IMR-90 (cell line): ENCODE measurements at regions of chr11 and their contacts with region 1.

Region 1: GRCh38 chr11:28836285-28837081 is 728.3 kb downstream of the METTL15 start:
- DNase-seq: peak; percentile 99
- ATAC-seq: peak; percentile 79
- H3K4me3 ChIP-seq: no peak overlapping the region
- H3K27ac ChIP-seq: peak overlapping the region; percentile 98
- H3K4me1 ChIP-seq: peaks cover 14% of the 10 kb centered on the region
- H3K27me3 ChIP-seq: no peaks in the 10 kb centered on the region
- CTCF ChIP-seq: no peak
- POLR2A ChIP-seq: peak; percentile 45
- RAD21 ChIP-seq: peak; percentile 8; the same call in 1 of the 2 replicates

Region 2: GRCh38 chr11:27698872-27699474 is 1137.5 kb before region 1 on chr11:
- CTCF ChIA-PET with region 1: interaction called, 5 read pairs
- POLR2A ChIA-PET with region 1: interaction called, 4 read pairs
- dilution Hi-C with region 1: no loop called
- in situ Hi-C with region 1: loop called (anchors 25 kb)
- intact Hi-C with region 1: loop called (anchors 2 kb)
- DNase-seq: peak; percentile 92
- ATAC-seq: peak; percentile 53
- H3K4me3 ChIP-seq: peak overlapping the region; percentile 85
- H3K27ac ChIP-seq: peak overlapping the region; percentile 92
- H3K4me1 ChIP-seq: peaks cover 6% of the 10 kb centered on the region; the same call in 1 of the 2 replicates
- H3K27me3 ChIP-seq: no peaks in the 10 kb centered on the region
- CTCF ChIP-seq: peak; percentile 84
- POLR2A ChIP-seq: peak; percentile 82
- RAD21 ChIP-seq: peak; percentile 85

Region 3: DNA sequence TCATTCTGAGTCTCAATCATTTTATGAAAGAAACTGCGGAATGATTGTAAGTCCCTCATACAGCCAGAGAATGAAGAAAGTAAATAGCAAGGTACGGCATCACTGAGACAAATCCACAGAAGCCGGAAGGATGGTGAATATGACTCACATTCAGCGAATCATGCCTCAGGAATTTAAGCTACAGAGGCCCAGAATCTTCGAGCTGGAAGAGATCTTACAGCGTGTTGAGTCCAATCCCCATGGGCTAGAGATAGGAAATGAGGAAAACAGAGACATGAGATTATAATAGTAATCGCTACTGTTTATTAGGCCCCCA is 901.7 kb before region 1 on chr11:
- CTCF ChIA-PET with region 1: no interaction called
- POLR2A ChIA-PET with region 1: no interaction called
- dilution Hi-C with region 1: no loop called
- in situ Hi-C with region 1: no loop called
- intact Hi-C with region 1: loop called (anchors 1 kb)
- DNase-seq: peak; percentile 98
- ATAC-seq: peak; percentile 69
- H3K4me3 ChIP-seq: peak overlapping the region; percentile 11; the same call in 1 of the 2 replicates
- H3K27ac ChIP-seq: peak overlapping the region; percentile 90
- H3K4me1 ChIP-seq: peaks cover 6% of the 10 kb centered on the region
- H3K27me3 ChIP-seq: no peaks in the 10 kb centered on the region
- CTCF ChIP-seq: no peak
- POLR2A ChIP-seq: no peak; the same call in none of the 2 replicates
- RAD21 ChIP-seq: peak; percentile 29; the same call in 1 of the 2 replicates

Region 4: GRCh38 chr11:28566339-28567089 is 270.0 kb before region 1 on chr11:
- CTCF ChIA-PET with region 1: no interaction called
- POLR2A ChIA-PET with region 1: no interaction called
- dilution Hi-C with region 1: no loop called
- in situ Hi-C with region 1: no loop called
- intact Hi-C with region 1: loop called (anchors 2 kb)
- DNase-seq: peak; percentile 100
- ATAC-seq: peak; percentile 98
- H3K4me3 ChIP-seq: peak overlapping the region; percentile 3; the same call in 1 of the 2 replicates
- H3K27ac ChIP-seq: peak overlapping the region; percentile 78
- H3K4me1 ChIP-seq: peaks cover 5% of the 10 kb centered on the region
- H3K27me3 ChIP-seq: no peaks in the 10 kb centered on the region
- CTCF ChIP-seq: no peak
- POLR2A ChIP-seq: peak; percentile 13; the same call in 1 of the 2 replicates
- RAD21 ChIP-seq: peak; percentile 40

Region 5: GRCh38 chr11:29019960-29020683 is 183.6 kb after region 1 on chr11:
- CTCF ChIA-PET with region 1: no interaction called
- POLR2A ChIA-PET with region 1: no interaction called
- dilution Hi-C with region 1: no loop called
- in situ Hi-C with region 1: no loop called
- intact Hi-C with region 1: loop called (anchors 2 kb)
- DNase-seq: peak; percentile 66
- ATAC-seq: peak; percentile 38
- H3K4me3 ChIP-seq: no peak overlapping the region
- H3K27ac ChIP-seq: peak overlapping the region; percentile 30; the same call in 1 of the 2 replicates
- H3K4me1 ChIP-seq: peaks cover 6% of the 10 kb centered on the region; the same call in 1 of the 2 replicates
- H3K27me3 ChIP-seq: no peaks in the 10 kb centered on the region
- CTCF ChIP-seq: peak; percentile 63
- POLR2A ChIP-seq: no peak
- RAD21 ChIP-seq: peak; percentile 55

Region 6: GRCh38 chr11:29173660-29174062 is 337.2 kb after region 1 on chr11:
- CTCF ChIA-PET with region 1: no interaction called
- POLR2A ChIA-PET with region 1: interaction called, 3 read pairs
- dilution Hi-C with region 1: no loop called
- in situ Hi-C with region 1: no loop called
- intact Hi-C with region 1: loop called (anchors 1 kb)
- DNase-seq: peak; percentile 99
- ATAC-seq: peak; percentile 86
- H3K4me3 ChIP-seq: no peak overlapping the region
- H3K27ac ChIP-seq: peak overlapping the region; percentile 99; the same call in 1 of the 2 replicates
- H3K4me1 ChIP-seq: peaks cover 6% of the 10 kb centered on the region
- H3K27me3 ChIP-seq: no peaks in the 10 kb centered on the region
- CTCF ChIP-seq: no peak
- POLR2A ChIP-seq: no peak
- RAD21 ChIP-seq: peak; percentile 19; the same call in 1 of the 2 replicates

Region 7: DNA sequence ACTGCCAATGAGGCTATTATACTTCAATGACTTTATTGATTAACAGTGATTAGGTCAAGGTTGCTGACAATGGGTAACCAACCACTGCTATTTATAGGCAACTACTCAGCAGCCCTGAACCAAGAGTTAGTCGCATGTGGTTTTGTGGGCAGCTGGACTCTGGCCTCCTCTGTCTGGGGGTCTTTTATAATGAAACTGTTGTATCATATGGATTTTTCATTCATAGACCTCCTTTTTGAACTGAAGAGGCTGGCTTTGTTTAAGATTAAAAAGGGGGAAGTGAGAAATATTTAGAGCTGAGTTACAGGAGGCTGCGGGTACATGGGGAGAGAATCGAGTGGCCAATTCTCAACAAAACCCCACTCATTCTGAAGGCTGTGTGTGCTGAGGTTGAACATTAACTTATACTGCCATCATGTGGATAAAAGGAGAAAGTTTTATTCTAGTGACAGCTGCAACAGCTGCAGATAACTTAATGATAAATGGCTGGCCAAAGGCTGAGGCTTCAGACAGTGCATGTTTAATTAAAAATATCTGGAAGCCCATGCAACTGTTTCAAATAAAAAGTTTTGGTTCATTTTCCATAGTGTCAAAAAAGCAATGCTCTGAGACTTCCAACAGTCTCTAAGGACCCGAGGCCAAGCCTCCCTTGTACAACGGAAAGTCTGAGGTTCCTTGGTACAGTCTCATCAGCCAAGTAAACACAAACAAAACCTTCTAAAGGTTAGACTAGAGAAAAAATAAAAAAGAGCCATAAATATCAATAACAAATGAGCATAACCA is 497.7 kb after region 1 on chr11:
- CTCF ChIA-PET with region 1: interaction called, 3 read pairs
- POLR2A ChIA-PET with region 1: interaction called, 3 read pairs
- dilution Hi-C with region 1: no loop called
- in situ Hi-C with region 1: loop called (anchors 10 kb)
- intact Hi-C with region 1: loop called (anchors 1 kb)
- DNase-seq: peak; percentile 88
- ATAC-seq: peak; percentile 67
- H3K4me3 ChIP-seq: no peak overlapping the region
- H3K27ac ChIP-seq: peak overlapping the region; percentile 93
- H3K4me1 ChIP-seq: peaks cover 14% of the 10 kb centered on the region
- H3K27me3 ChIP-seq: no peaks in the 10 kb centered on the region
- CTCF ChIP-seq: peak; percentile 76
- POLR2A ChIP-seq: no peak
- RAD21 ChIP-seq: peak; percentile 91